ENCODE measurements at regions of chr4 and their contacts with region 1.

Region 1: DNA sequence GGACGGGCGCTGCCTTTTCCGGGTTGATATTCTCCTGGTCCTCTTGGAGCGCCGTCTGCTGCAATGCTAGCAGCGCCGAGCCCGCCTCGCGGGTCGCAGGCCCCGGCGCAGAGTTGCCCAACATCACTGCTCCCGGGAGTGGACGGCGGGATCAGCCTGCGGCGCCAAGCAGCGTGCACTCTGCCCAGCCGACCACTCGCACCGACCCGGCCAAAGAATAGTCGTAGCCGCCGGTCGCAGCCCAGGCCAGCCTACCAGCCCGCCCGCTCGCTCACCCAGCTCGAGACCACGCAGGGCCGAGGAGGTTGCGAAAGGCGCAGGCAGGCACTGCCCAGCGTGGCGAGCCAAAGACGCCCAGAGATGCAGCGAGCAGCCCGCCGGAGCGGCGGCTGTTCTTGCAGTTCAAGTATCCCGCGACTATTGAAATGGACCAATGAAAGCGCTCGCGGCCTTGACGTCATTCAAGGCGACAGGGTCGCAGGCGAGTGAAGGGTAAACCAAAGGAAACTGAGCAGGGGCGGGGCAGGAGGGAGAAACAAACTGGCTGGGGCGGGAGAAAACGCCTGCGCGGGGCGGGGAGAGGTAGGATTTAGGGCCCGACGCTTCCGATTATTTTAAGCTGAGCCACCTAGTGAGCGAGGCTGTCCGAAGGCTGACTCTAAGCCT is at the start of gene CCNA2:
- DNase-seq: peak; percentile 92 to 98
- H3K4me3 ChIP-seq: peak within 1 kb of the TSS; percentile 72 to 100 (median 98)
- H3K27ac ChIP-seq: peak within 1 kb of the TSS; percentile 86
- H3K4me1 ChIP-seq: no peaks in the 10 kb centered on the region; a peak in 2 of 7 replicates
- H3K27me3 ChIP-seq: no peaks in the 10 kb centered on the region
- CTCF ChIP-seq: no peak
- EP300 ChIP-seq: 0 out of 3 replicates have a peak, but pooled peaks of 1 of the 2 experiments have one; percentile 29
- POLR2A ChIP-seq: peak; percentile 92 to 94
- RAD21 ChIP-seq: no peak
- total RNA-seq, gene CCNA2: 95.1 and 98.6 TPM in 2 replicates

Region 2: GRCh38 chr4:121800961-121801714 is 22.5 kb before region 1 on chr4 and contains the start of gene EXOSC9:
- CTCF ChIA-PET with region 1: no interaction called
- POLR2A ChIA-PET with region 1: interaction called, 246 read pairs
- DNase-seq: peak; percentile 82 to 99
- H3K4me3 ChIP-seq: peak within 1 kb of the TSS; percentile 73 to 98 (median 94)
- H3K27ac ChIP-seq: peak within 1 kb of the TSS; percentile 96
- H3K4me1 ChIP-seq: peaks cover 0 to 6% (median 2%) of the 10 kb centered on the region in 4 experiments; a peak in 4 of 7 replicates
- H3K27me3 ChIP-seq: no peaks in the 10 kb centered on the region
- CTCF ChIP-seq: no peak
- EP300 ChIP-seq: peak in 1 of 2 experiments; percentile 82; a peak in 1 of 3 replicates
- POLR2A ChIP-seq: peak; percentile 91 to 96
- RAD21 ChIP-seq: no peak
- total RNA-seq, gene EXOSC9: 53.4 and 54.9 TPM in 2 replicates

Region 3: DNA sequence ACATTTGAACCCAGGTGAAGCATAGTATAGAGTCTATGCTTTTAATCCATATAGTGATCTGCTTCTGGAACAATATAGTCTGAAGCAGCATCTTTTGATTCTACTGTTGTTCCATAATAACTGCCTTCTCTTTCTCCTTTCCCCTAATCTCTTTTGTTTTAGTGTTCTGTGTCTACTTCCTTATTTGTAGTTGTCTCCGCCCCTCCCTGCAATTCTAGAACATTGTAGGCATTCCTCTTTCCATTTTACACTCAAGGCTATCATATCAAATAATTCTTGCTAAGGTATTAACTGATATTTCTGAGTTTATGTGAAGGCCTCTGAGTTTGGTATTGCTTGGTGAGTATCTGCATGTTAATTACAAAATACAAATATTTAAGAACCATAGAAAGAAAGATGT is 340.1 kb after region 1 on chr4:
- CTCF ChIA-PET with region 1: no interaction called
- POLR2A ChIA-PET with region 1: no interaction called
- DNase-seq: no peak
- H3K4me3 ChIP-seq: no peak overlapping the region
- H3K27ac ChIP-seq: no peak overlapping the region
- H3K4me1 ChIP-seq: 0 out of 7 replicates have a peak, but pooled peaks cover 0 to 2% (median 0%) of the 10 kb centered on the region in 4 experiments
- H3K27me3 ChIP-seq: no peaks in the 10 kb centered on the region
- CTCF ChIP-seq: no peak
- EP300 ChIP-seq: no peak
- POLR2A ChIP-seq: no peak
- RAD21 ChIP-seq: no peak

Measured in H1 (cell line).